ENCODE measurements at regions of chr5 and their contacts with region 1.

Region 1: GRCh38 chr5:116574367-116575325 is at the start of gene SEMA6A:
- DNase-seq: peak; percentile 94
- ATAC-seq: peak; percentile 93
- total RNA-seq, gene SEMA6A: 7.8 TPM

Region 2: DNA sequence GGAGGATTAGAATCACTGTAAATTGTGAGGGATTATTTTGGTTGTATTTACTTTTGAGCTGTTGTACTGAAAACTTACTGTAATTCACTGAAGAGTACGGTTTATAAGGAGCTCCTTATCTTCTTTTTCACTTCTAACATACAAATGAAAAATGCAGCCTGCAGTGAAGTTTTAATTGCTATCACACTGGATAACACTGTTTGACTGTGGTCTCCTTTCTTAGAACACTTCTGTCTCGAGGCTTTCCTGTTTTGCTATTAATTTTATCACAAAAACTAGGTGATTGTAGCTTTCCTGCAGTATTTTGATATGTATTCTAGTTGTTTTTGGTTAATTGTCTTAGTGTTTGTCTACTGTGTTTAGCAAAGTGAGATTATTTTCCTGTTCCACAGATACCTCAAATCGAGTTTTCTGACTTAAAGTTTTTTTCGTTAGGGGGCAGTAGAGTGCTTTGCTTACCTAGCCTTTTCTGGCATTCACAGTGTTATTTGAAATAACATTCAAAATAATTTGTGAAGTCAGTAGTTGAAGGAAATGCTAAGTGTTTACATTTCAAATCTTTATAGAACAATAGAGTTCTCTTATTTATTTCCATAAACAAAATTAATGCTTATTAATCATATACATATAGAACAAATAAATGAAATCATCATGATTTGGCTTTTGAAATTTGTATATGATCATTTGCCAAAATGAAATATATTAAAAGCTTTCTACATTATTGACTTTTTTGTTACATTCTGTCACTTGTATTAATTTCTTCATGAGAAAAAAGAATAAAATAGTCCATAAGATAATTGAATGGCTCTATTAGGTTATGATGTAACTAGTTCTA is 436.9 kb before region 1 on chr5:
- intact Hi-C with region 1: loop called (anchors 10 kb)
- DNase-seq: no peak
- ATAC-seq: no peak

Region 3: GRCh38 chr5:116289276-116289675 is 285.4 kb before region 1 on chr5:
- intact Hi-C with region 1: no loop called
- DNase-seq: no peak
- ATAC-seq: no peak

Region 4: GRCh38 chr5:116404016-116404415 is 170.6 kb before region 1 on chr5:
- intact Hi-C with region 1: loop called (anchors 10 kb)
- DNase-seq: no peak
- ATAC-seq: peak; percentile 63

Region 5: DNA sequence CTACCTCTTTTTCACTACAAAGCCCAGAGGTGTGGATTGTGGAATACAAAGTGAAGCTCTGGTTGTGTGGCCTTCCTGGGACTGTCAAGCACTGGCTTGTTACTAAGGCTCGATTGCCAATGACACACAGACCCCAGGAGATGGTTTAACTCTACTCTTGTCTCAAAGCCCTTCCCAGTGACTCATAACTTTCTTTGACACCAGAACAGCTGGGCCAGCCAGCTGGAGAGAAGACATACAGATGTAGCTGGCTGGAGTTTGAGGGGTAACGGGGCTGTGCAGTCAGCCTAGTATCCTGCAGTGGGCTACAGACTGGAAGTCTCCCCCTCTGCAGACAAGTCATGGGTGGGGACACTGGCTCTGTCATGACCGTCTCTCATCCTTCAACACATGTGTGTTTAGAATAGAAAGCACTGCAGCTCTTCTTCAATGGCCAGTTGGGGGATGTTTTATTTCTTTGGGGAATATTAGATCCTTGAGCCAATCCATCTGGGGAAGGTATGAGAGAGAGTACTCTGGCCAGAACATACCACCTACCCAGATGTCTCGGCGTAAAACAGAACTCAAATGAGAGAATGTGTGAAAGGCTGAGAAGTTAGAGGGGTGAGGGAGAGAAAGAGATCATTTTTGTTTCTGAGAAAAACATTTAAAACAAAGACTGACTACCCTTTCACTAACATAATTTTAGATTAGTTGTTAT is 53.3 kb before region 1 on chr5:
- intact Hi-C with region 1: no loop called
- DNase-seq: peak; percentile 79
- ATAC-seq: peak; percentile 91

Region 6: GRCh38 chr5:116605310-116606070 is 30.8 kb after region 1 on chr5:
- intact Hi-C with region 1: no loop called
- DNase-seq: no peak
- ATAC-seq: peak; percentile 48

Region 7: GRCh38 chr5:116733991-116734975 is 159.6 kb after region 1 on chr5:
- intact Hi-C with region 1: loop called (anchors 10 kb)
- DNase-seq: no peak
- ATAC-seq: peak; percentile 58

Region 8: DNA sequence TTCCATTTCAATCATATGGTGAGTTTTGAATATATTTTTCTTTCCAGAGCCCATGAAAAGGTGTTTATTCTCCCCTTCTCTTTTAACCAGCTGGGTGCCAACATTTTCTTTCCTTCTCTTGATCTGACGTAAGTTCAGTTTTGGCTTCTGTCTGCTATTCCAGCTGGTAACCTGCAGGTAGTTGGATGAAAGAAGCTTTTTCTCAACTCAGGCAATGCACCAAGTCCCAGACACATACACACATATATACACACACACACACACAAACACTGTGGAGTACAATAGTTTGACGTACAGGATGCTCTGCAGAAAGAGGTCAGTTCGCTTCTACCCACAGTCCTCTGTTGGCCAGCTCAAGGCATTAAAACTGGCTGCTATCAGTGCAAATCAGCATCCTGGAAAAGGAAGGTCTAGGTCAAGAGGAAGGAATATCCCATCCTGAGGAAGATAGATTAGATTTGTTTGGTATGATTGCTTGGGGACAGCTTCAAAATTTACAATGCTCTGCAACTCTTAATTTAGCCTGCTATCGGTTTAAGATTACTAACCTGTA is 214.3 kb after region 1 on chr5:
- intact Hi-C with region 1: loop called (anchors 10 kb)
- DNase-seq: no peak
- ATAC-seq: peak; percentile 64

Region 9: GRCh38 chr5:116947691-116948528 is 373.3 kb after region 1 on chr5:
- intact Hi-C with region 1: loop called (anchors 1 kb)
- DNase-seq: peak; percentile 67
- ATAC-seq: peak; percentile 63

Region 10: DNA sequence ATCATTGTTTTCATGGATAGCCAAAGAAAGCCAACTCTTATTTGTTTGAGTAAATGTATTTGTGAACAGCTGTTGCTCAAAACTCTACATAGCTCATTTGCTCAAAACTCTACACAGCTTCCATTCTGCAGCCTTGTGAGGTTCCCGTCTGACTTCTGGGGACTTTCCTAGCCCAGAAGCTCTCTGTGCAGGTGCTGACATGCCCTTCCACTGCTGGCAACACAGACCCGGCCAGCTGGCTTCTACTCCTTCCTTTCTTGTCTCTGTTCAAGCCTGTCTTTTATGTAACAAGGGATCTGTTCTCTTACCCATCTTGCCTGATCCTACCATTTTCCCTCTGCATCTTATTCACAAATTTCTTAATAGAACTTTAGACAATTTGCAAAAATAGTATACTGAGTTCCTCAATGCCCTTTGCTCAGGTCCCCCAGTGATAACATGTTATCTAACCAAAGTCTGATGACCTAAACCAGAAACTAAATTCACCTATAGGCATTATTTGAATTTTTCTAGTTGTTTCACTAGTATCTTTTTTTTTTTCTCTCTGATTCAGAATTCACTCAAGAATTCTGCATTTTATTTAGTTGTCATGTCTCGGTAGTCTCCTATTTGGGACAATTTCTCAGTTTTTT is 556.5 kb after region 1 on chr5:
- intact Hi-C with region 1: loop called (anchors 5 kb)
- DNase-seq: no peak
- ATAC-seq: no peak